HEK293 (cell line): ENCODE measurements at regions of chr1 and their contacts with region 1.

Region 1: GRCh38 chr1:16366722-16367257 is at the start of gene SZRD1:
- H3K4me3 ChIP-seq: peak within 1 kb of the TSS; percentile 97
- H3K27ac ChIP-seq: peak within 1 kb of the TSS; percentile 93
- H3K4me1 ChIP-seq: peaks cover 9% of the 10 kb centered on the region
- CTCF ChIP-seq: no peak

Region 2: GRCh38 chr1:16351994-16352841 is 14.6 kb before region 1 on chr1 and contains the start of gene FBXO42:
- CTCF ChIA-PET with region 1: interaction called, 36 read pairs
- POLR2A ChIA-PET with region 1: interaction called, 9 read pairs
- H3K4me3 ChIP-seq: peak within 1 kb of the TSS; percentile 95
- H3K27ac ChIP-seq: peak within 1 kb of the TSS; percentile 75
- H3K4me1 ChIP-seq: peaks cover 16% of the 10 kb centered on the region
- CTCF ChIP-seq: peak; percentile 79